ENCODE measurements at regions of chr14 and their contacts with region 1.

Region 1: GRCh38 chr14:61025251-61026223 is 44.5 kb downstream of the SLC38A6 start:
- DNase-seq: peak; percentile 46 to 66 (median 62)
- H3K4me3 ChIP-seq: no peak overlapping the region
- H3K4me3 Mint-ChIP-seq: no peak overlapping the region
- H3K27ac ChIP-seq: no peak overlapping the region
- H3K27ac Mint-ChIP-seq: peak overlapping the region in 1 of 7 donors; percentile 26
- H3K4me1 ChIP-seq: no peaks in the 10 kb centered on the region
- H3K4me1 Mint-ChIP-seq: peaks cover 5% of the 10 kb centered on the region
- H3K27me3 ChIP-seq: no peaks in the 10 kb centered on the region
- H3K27me3 Mint-ChIP-seq: peaks cover 0 to 3% (median 0%) of the 10 kb centered on the region in 3 donors
- CTCF ChIP-seq: peak; percentile 93

Region 2: DNA sequence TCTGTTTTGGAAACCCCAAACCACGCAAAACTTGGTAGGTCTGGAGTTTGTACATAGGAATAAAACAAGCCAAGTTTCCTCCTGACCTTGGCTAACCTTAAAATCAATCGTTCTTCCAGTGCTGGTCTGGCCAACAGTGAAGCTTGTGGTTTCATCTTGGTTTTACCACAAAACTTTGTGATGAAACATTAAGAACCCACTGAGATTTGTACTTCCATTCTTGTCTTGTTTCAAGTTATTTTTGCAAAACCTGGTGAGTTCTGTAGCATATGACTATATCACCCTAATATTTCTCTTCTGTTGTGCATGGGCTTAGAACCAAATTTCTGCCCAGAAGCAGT is 402.6 kb before region 1 on chr14:
- intact Hi-C with region 1: loop called (anchors 2 to 5 kb)
- DNase-seq: no peak
- H3K4me3 ChIP-seq: no peak overlapping the region
- H3K4me3 Mint-ChIP-seq: no peak overlapping the region
- H3K27ac ChIP-seq: no peak overlapping the region
- H3K27ac Mint-ChIP-seq: no peak overlapping the region
- H3K4me1 ChIP-seq: peaks cover 4% of the 10 kb centered on the region in 2 donors
- H3K4me1 Mint-ChIP-seq: peaks cover 5% of the 10 kb centered on the region
- H3K27me3 ChIP-seq: peaks cover 26 to 28% of the 10 kb centered on the region in 2 donors
- H3K27me3 Mint-ChIP-seq: peaks cover 31 to 55% (median 34%) of the 10 kb centered on the region in 3 donors
- CTCF ChIP-seq: no peak

Region 3: DNA sequence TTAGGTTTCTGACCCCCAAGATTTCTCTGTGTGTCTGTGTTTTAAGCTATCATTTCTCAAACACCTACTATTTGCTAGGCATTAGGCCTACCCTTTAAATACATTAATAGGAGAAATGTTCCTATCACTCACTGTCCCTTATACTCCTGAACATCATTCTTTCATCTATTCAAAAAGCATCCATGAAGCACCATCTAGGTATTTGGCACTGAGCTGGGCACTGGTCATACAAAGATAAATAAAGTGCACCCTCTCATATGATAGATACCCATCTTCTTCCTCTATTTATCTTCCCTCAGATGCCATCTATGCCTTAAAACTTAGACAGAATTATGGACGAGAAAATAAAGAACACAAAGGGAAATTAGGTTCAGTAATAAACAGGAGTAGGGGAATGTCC is 396.6 kb before region 1 on chr14:
- intact Hi-C with region 1: loop called (anchors 2 to 5 kb)
- DNase-seq: no peak
- H3K4me3 ChIP-seq: no peak overlapping the region
- H3K4me3 Mint-ChIP-seq: peak overlapping the region in 1 of 2 donors; percentile 15
- H3K27ac ChIP-seq: no peak overlapping the region
- H3K27ac Mint-ChIP-seq: no peak overlapping the region
- H3K4me1 ChIP-seq: no peaks in the 10 kb centered on the region
- H3K4me1 Mint-ChIP-seq: no peaks in the 10 kb centered on the region
- H3K27me3 ChIP-seq: peaks cover 51 to 55% of the 10 kb centered on the region in 2 donors
- H3K27me3 Mint-ChIP-seq: peaks cover 29 to 66% (median 43%) of the 10 kb centered on the region in 3 donors
- CTCF ChIP-seq: no peak

Region 4: GRCh38 chr14:60724137-60724619 is 301.4 kb before region 1 on chr14 and contains the start of gene SIX4:
- intact Hi-C with region 1: loop called in 1 of 2 experiments (anchors 10 kb)
- DNase-seq: peak in 1 of 3 donors; percentile 17
- H3K4me3 ChIP-seq: peak within 1 kb of the TSS; percentile 3 to 73 (median 36)
- H3K4me3 Mint-ChIP-seq: peak within 1 kb of the TSS; percentile 80 to 96
- H3K27ac ChIP-seq: no peak within 1 kb of the TSS
- H3K27ac Mint-ChIP-seq: no peak within 1 kb of the TSS
- H3K4me1 ChIP-seq: peaks cover 23 to 34% of the 10 kb centered on the region in 2 donors
- H3K4me1 Mint-ChIP-seq: peaks cover 27% of the 10 kb centered on the region
- H3K27me3 ChIP-seq: peaks cover 69 to 97% of the 10 kb centered on the region in 2 donors
- H3K27me3 Mint-ChIP-seq: peaks cover 87 to 96% (median 88%) of the 10 kb centered on the region in 3 donors
- CTCF ChIP-seq: no peak
- polyA plus RNA-seq, gene SIX4: not detected